SK-N-SH (cell line): ENCODE measurements at regions of chr6 and their contacts with region 1.

Region 1: DNA sequence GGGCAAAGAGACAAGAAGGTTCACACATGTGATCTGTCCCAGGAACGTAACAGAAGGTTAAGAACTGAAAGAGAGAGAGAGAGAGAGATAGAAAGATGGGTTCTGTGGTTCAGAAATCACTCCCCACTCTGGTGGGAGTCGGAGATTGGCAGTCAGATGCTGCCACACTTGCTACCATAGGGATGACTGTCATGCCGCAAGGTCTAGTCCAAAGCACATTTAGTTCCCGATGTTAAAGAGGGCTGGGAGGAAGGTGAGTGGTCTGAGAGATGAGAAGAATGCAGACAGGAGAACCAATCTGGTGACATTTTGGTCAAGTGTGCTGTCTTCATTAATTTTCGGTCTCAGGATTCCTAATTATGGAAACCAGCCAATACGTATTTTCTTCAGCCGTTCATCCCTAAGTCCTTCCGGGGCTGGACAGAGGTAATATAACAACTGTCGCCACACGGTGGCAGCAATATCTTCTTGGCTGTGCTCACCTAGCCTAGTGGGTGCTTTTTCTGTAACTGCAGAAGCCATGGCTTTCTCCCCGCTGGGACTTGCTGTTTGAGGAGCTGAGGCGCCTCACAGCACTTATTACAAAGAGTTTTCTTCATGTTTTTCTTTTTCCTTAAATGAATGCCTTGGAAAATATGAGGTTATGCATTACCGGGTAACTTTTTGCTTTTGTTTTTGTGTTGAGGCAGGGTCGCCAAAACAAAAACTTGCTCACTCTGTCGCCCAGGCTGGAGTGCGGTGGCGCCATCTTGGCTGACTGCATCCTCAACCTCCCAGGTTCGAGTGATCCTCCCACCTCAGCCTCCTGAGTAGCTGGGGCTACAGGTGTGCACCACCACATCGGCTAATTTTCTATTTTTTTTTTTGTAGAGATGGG is 46.0 kb downstream of the SLC35D3 start:
- DNase-seq: peak; percentile 42
- H3K4me3 ChIP-seq: 0 out of 4 replicates have a peak overlapping the region, but pooled peaks of 1 of the 2 experiments have one; percentile 26
- H3K27ac ChIP-seq: peak overlapping the region in 1 of 2 experiments; percentile 95; a peak in 2 of 4 replicates
- H3K4me1 ChIP-seq: peaks cover 0 to 43% of the 10 kb centered on the region in 2 experiments; a peak in 2 of 4 replicates
- H3K27me3 ChIP-seq: no peaks in the 10 kb centered on the region
- CTCF ChIP-seq: peak; percentile 55
- EP300 ChIP-seq: no peak
- RAD21 ChIP-seq: peak; percentile 74

Region 2: GRCh38 chr6:136983687-136984086 is 15.6 kb after region 1 on chr6:
- CTCF ChIA-PET with region 1: interaction called, 16 read pairs
- POLR2A ChIA-PET with region 1: interaction called, 93 read pairs
- DNase-seq: no peak
- H3K4me3 ChIP-seq: no peak overlapping the region
- H3K27ac ChIP-seq: peak overlapping the region in 1 of 2 experiments; percentile 100; a peak in 2 of 4 replicates
- H3K4me1 ChIP-seq: peaks cover 0 to 59% of the 10 kb centered on the region in 2 experiments; a peak in 2 of 4 replicates
- H3K27me3 ChIP-seq: no peaks in the 10 kb centered on the region
- CTCF ChIP-seq: no peak
- EP300 ChIP-seq: peak in 1 of 2 experiments; percentile 83; a peak in 2 of 4 replicates
- RAD21 ChIP-seq: no peak

Region 3: GRCh38 chr6:136989571-136990241 is 21.6 kb after region 1 on chr6:
- CTCF ChIA-PET with region 1: interaction called, 16 read pairs
- POLR2A ChIA-PET with region 1: interaction called, 67 read pairs
- DNase-seq: peak; percentile 87
- H3K4me3 ChIP-seq: peak overlapping the region; percentile 42 to 49
- H3K27ac ChIP-seq: peak overlapping the region in 1 of 2 experiments; percentile 100; a peak in 2 of 4 replicates
- H3K4me1 ChIP-seq: peaks cover 0 to 32% of the 10 kb centered on the region in 2 experiments; a peak in 2 of 4 replicates
- H3K27me3 ChIP-seq: peaks cover 9% of the 10 kb centered on the region; the same call in 1 of the 2 replicates
- CTCF ChIP-seq: no peak
- EP300 ChIP-seq: 0 out of 4 replicates have a peak, but pooled peaks of 1 of the 2 experiments have one; percentile 8
- RAD21 ChIP-seq: no peak

Region 4: GRCh38 chr6:137013738-137014602 is 45.9 kb after region 1 on chr6:
- CTCF ChIA-PET with region 1: interaction called, 37 read pairs
- POLR2A ChIA-PET with region 1: interaction called, 12 read pairs
- DNase-seq: peak; percentile 56
- H3K4me3 ChIP-seq: no peak overlapping the region
- H3K27ac ChIP-seq: peak overlapping the region in 1 of 2 experiments; percentile 96; a peak in 2 of 4 replicates
- H3K4me1 ChIP-seq: peaks cover 0 to 18% of the 10 kb centered on the region in 2 experiments; a peak in 2 of 4 replicates
- H3K27me3 ChIP-seq: no peaks in the 10 kb centered on the region
- CTCF ChIP-seq: peak; percentile 54
- EP300 ChIP-seq: peak in 1 of 2 experiments; percentile 93; a peak in 2 of 4 replicates
- RAD21 ChIP-seq: peak; percentile 78

Region 5: DNA sequence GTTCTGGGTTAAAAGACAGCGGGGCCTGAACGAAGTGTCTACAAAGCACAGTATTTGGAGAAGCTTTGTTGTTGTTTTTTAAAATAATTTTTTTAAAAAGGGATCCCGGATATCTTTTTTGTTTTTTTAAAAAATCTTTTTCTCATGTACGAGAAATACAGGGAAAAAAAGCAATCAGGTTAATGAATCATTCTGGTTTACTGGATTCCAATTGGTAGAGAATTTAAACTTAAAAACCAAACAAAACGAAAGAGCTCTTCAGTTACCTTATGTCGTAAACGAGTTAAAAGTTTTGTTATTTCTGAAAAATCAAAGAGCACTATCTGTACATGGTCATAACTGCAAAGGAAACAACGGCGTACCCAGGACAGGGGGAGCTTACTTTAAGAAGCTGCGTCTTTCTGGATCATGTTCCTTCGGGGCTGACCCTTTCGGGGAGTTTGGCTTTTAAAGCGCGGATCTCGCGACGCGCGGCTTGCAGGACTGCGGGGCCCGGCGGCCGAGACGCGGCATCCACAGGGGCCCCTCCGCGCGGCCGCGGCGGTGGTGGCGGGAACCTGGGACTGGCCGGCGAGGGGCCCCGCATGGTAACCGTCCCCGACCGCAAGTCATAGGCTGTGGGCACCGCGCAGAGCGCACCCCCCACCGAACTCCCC is 75.7 kb after region 1 on chr6:
- CTCF ChIA-PET with region 1: interaction called, 7 read pairs
- POLR2A ChIA-PET with region 1: interaction called, 10 read pairs
- DNase-seq: no peak
- H3K4me3 ChIP-seq: peak overlapping the region; percentile 63 to 72
- H3K27ac ChIP-seq: peak overlapping the region in 1 of 2 experiments; percentile 84; a peak in 2 of 4 replicates
- H3K4me1 ChIP-seq: peaks cover 0 to 3% of the 10 kb centered on the region in 2 experiments; a peak in 2 of 4 replicates
- H3K27me3 ChIP-seq: peaks cover 15% of the 10 kb centered on the region; the same call in 1 of the 2 replicates
- CTCF ChIP-seq: no peak
- EP300 ChIP-seq: no peak
- RAD21 ChIP-seq: no peak